PC-3 (cell line): ENCODE measurements at regions of chr5 and their contacts with region 1.

Region 1: GRCh38 chr5:98109561-98110006 is 663.9 kb upstream of the RGMB start:
- DNase-seq: peak; percentile 93
- ATAC-seq: peak; percentile 69
- H3K4me3 ChIP-seq: peak overlapping the region; percentile 21; the same call in 1 of the 2 replicates
- H3K27ac ChIP-seq: peak overlapping the region; percentile 97
- H3K4me1 ChIP-seq: peaks cover 49% of the 10 kb centered on the region
- H3K27me3 ChIP-seq: no peaks in the 10 kb centered on the region
- CTCF ChIP-seq: no peak

Region 2: GRCh38 chr5:96807075-96807654 is 1302.4 kb before region 1 on chr5:
- CTCF ChIA-PET with region 1: no interaction called
- POLR2A ChIA-PET with region 1: interaction called, 17 read pairs
- intact Hi-C with region 1: no loop called
- DNase-seq: peak; percentile 86
- ATAC-seq: peak; percentile 66
- H3K4me3 ChIP-seq: peak overlapping the region; percentile 90
- H3K27ac ChIP-seq: peak overlapping the region; percentile 88
- H3K4me1 ChIP-seq: peaks cover 10% of the 10 kb centered on the region
- H3K27me3 ChIP-seq: no peaks in the 10 kb centered on the region
- CTCF ChIP-seq: no peak

Region 3: DNA sequence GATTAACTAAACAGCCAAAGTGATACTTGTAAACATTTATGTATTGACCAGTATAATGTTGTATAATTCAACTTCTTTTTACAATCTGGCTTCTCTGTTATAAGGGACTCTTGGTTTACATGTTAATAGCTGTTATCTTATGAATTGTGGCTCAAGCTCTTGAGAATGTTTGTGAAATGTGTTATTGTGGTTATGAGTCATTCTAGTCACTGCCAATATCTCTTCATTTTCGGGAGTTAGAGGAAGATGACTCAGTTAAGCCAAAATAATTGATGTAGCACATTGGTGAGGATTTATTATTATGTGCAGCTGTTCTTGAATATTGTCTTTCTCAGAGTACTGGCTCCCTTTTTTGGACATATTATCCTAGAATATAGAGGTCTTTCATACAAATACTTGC is 271.4 kb before region 1 on chr5:
- CTCF ChIA-PET with region 1: no interaction called
- POLR2A ChIA-PET with region 1: no interaction called
- intact Hi-C with region 1: loop called (anchors 10 kb)
- DNase-seq: peak; percentile 96
- ATAC-seq: peak; percentile 81
- H3K4me3 ChIP-seq: no peak overlapping the region
- H3K27ac ChIP-seq: 0 out of 2 replicates have a peak overlapping the region, but pooled peaks have one; percentile 9
- H3K4me1 ChIP-seq: peaks cover 29% of the 10 kb centered on the region
- H3K27me3 ChIP-seq: peaks cover 5% of the 10 kb centered on the region; the same call in 1 of the 2 replicates
- CTCF ChIP-seq: no peak

Region 4: DNA sequence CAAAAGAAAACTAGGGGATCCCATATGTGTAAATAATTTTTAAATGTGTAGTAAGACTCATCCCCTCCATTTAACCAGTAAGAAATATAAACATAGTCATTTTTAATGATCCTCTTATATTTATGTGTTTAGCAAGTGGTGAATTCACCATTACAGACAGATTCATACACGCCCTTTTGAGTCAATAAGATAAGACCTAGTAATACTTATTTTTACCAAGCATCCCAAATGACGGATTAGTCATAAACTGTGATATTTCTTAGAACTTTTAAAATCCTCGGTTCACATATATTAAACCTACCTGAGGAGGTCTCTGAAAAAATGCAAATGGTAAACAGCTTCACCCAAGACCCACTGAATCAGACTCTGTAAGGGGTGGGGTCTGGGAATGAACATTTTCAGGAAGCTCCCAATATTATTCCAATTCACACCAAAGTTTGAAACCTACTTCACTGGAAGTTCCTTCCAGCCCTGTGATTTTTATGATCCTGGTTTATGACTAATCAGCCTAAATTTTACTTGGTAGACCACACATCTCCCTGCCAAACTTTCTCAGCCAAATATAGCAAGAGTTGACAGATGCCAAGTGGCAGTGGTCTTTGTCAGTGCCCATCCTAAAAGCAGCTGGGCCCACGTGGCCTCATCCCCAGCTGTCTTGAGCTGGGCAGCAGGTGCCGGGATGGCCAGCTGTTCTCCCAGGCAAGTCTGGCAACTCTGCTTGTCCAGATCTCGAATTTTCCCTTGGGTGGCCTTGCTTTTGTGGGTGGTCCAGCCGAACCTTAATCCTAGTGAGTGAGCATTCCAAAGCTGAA is 104.9 kb after region 1 on chr5:
- CTCF ChIA-PET with region 1: no interaction called
- POLR2A ChIA-PET with region 1: no interaction called
- intact Hi-C with region 1: loop called (anchors 1 kb)
- DNase-seq: peak; percentile 94
- ATAC-seq: peak; percentile 92
- H3K4me3 ChIP-seq: 0 out of 2 replicates have a peak overlapping the region, but pooled peaks have one; percentile 5
- H3K27ac ChIP-seq: peak overlapping the region; percentile 79
- H3K4me1 ChIP-seq: peaks cover 22% of the 10 kb centered on the region
- H3K27me3 ChIP-seq: no peaks in the 10 kb centered on the region
- CTCF ChIP-seq: no peak

Region 5: DNA sequence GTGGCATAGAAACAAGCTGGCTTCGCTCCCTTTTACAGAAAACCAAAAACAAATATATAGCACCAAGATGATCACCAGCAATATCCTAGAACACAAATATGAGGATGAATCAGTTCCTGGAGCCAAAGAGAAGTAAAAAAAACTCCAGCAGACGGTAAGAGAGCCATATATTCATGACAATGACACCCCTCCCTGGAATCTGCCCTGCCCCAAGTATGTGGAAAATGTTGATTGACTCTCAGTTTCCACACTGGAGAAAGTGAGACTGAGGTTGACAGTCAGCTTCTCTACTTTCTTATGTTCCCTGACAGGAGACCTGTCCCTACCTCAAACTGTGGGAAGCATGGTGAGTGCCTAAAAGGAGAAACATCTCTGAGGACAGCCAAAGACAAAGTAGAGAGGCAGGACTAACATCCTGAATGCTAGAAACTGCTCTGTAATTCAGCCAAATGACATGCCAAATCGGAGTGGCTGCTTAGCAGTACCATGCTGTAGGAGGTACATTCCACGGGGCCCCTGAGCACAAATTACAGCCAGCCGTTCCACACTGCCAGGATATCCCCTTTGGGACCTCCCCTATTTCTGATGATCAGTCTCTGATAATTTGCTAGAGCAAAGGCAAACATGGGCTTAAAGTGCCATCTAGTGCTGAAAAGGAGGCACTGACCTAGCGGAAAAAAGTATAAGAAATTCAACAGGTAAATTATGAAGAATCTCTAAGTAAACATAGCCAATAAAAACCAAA is 239.8 kb after region 1 on chr5:
- CTCF ChIA-PET with region 1: no interaction called
- POLR2A ChIA-PET with region 1: no interaction called
- intact Hi-C with region 1: loop called (anchors 5 kb)
- DNase-seq: peak; percentile 94
- ATAC-seq: peak; percentile 94
- H3K4me3 ChIP-seq: peak overlapping the region; percentile 34; the same call in 1 of the 2 replicates
- H3K27ac ChIP-seq: peak overlapping the region; percentile 90
- H3K4me1 ChIP-seq: peaks cover 5% of the 10 kb centered on the region; the same call in 1 of the 2 replicates
- H3K27me3 ChIP-seq: no peaks in the 10 kb centered on the region
- CTCF ChIP-seq: peak; percentile 99

Region 6: GRCh38 chr5:98433673-98434072 is 324.1 kb after region 1 on chr5:
- CTCF ChIA-PET with region 1: no interaction called
- POLR2A ChIA-PET with region 1: no interaction called
- intact Hi-C with region 1: no loop called
- DNase-seq: peak; percentile 56
- ATAC-seq: peak; percentile 49
- H3K4me3 ChIP-seq: no peak overlapping the region
- H3K27ac ChIP-seq: no peak overlapping the region
- H3K4me1 ChIP-seq: no peaks in the 10 kb centered on the region
- H3K27me3 ChIP-seq: no peaks in the 10 kb centered on the region
- CTCF ChIP-seq: no peak